CD14-positive monocyte (primary cell): ENCODE measurements at regions of chr1 and their contacts with region 1.

Region 1: DNA sequence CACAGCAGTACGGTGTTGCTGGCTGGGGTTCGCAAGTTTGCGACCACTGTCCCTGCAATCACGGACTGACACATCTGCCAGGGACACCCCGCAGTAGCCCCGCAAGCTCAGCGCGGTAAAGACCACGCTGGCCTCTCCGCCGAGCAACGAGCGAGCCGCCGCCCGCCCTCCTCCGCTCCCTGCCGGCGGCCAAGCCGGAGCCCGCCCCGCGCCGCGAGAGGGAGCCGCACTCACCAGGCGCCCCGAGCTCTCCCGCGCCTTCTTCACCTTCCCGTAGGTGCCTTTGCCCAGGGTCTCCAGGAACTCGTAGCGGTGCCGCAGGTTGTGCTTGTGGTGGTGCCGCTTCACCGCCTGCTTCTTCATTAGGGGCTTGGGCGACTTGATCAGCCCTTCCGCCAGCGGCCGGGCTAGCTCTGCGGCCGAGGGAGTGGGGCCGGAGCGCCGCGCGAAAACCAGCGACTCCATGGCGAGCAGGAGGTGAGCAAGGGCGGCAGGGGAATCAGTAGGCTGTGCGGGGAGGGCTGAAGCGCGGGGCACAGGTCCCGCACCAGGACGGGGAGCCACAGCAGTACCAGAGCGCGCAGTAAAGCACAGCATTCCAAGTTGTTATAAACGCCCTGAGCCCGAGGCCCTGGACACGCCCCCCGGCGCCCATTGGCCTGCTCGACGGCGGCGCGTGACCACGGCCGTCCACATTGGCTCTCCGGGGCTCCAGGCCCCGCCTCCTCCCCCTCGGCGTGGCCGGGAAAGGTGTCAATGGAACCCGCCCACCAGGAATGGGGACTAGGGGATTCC is at the start of gene NUAK2:
- DNase-seq: peak; percentile 77 to 88 (median 82)
- H3K4me3 ChIP-seq: peak within 1 kb of the TSS; percentile 93 to 96 (median 95)
- H3K4me3 Mint-ChIP-seq: peak within 1 kb of the TSS; percentile 91 to 98
- H3K27ac ChIP-seq: peak within 1 kb of the TSS; percentile 6 to 88
- H3K27ac Mint-ChIP-seq: peak within 1 kb of the TSS; percentile 94 to 99 (median 95)
- H3K4me1 ChIP-seq: peaks cover 47 to 59% of the 10 kb centered on the region in 2 donors
- H3K4me1 Mint-ChIP-seq: peaks cover 55% of the 10 kb centered on the region
- H3K27me3 ChIP-seq: no peaks in the 10 kb centered on the region
- H3K27me3 Mint-ChIP-seq: peaks cover 5 to 10% (median 6%) of the 10 kb centered on the region in 3 donors
- CTCF ChIP-seq: peak; percentile 26
- polyA plus RNA-seq, gene NUAK2: 9.1 to 44.9 (median 21.9) TPM

Region 2: GRCh38 chr1:205273551-205273982 is 47.8 kb before region 1 on chr1:
- intact Hi-C with region 1: loop called (anchors 1 kb)
- DNase-seq: peak; percentile 71 to 83 (median 79)
- H3K4me3 ChIP-seq: no peak overlapping the region
- H3K4me3 Mint-ChIP-seq: no peak overlapping the region
- H3K27ac ChIP-seq: no peak overlapping the region
- H3K27ac Mint-ChIP-seq: peak overlapping the region in 1 of 7 donors; percentile 30
- H3K4me1 ChIP-seq: peaks cover 4 to 5% of the 10 kb centered on the region in 2 donors
- H3K4me1 Mint-ChIP-seq: peaks cover 13% of the 10 kb centered on the region
- H3K27me3 ChIP-seq: no peaks in the 10 kb centered on the region
- H3K27me3 Mint-ChIP-seq: peaks cover 2 to 5% (median 3%) of the 10 kb centered on the region in 3 donors
- CTCF ChIP-seq: peak; percentile 98

Region 3: GRCh38 chr1:205284343-205285144 is 36.8 kb before region 1 on chr1:
- intact Hi-C with region 1: loop called (anchors 2 to 5 kb)
- DNase-seq: peak; percentile 99
- H3K4me3 ChIP-seq: peak overlapping the region in 1 of 3 experiments; percentile 64
- H3K4me3 Mint-ChIP-seq: peak overlapping the region; percentile 52 to 73
- H3K27ac ChIP-seq: peak overlapping the region; percentile 81 to 93
- H3K27ac Mint-ChIP-seq: peak overlapping the region; percentile 96 to 99 (median 98)
- H3K4me1 ChIP-seq: peaks cover 61 to 63% of the 10 kb centered on the region in 2 donors
- H3K4me1 Mint-ChIP-seq: peaks cover 67% of the 10 kb centered on the region
- H3K27me3 ChIP-seq: no peaks in the 10 kb centered on the region
- H3K27me3 Mint-ChIP-seq: peaks cover 2 to 7% (median 2%) of the 10 kb centered on the region in 3 donors
- CTCF ChIP-seq: peak; percentile 6

Region 4: GRCh38 chr1:205306929-205307566 is 14.3 kb before region 1 on chr1:
- intact Hi-C with region 1: loop called in 1 of 2 experiments (anchors 2 kb)
- DNase-seq: no peak
- H3K4me3 ChIP-seq: no peak overlapping the region
- H3K4me3 Mint-ChIP-seq: no peak overlapping the region
- H3K27ac ChIP-seq: no peak overlapping the region
- H3K27ac Mint-ChIP-seq: peak overlapping the region in 2 of 7 donors; percentile 48 to 65
- H3K4me1 ChIP-seq: peaks cover 17 to 22% of the 10 kb centered on the region in 2 donors
- H3K4me1 Mint-ChIP-seq: peaks cover 22% of the 10 kb centered on the region
- H3K27me3 ChIP-seq: no peaks in the 10 kb centered on the region
- H3K27me3 Mint-ChIP-seq: peaks cover 0 to 2% (median 0%) of the 10 kb centered on the region in 3 donors
- CTCF ChIP-seq: no peak